ENCODE measurements at regions of chr12 and their contacts with region 1.

Region 1: DNA sequence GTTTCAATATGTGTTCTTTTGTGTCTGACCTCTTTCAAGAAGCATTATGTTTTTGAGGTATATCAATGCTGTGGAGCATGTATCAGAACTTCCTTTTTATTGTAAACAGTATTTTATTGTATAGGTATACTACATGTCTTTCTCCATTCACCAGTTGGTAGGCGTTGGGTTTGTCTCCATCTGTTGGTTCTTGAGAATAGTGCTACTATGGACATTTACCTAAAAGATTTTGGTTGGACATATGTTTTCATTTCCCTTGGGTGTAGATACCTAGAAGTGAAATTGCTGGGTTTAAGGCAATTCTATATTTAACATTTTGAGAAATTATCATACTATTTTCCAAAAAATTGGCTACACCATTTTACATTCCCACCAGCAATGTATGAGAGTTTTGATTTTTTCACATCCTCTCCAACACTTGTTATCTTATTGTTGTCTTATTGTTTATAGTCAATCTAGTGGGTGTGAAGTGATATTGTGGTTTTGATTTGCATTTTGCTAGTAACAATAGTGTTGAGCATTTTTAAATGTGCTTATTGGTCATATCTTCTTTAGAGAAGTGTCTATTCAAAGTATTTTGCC is 409.2 kb downstream of the IPO8 start:
- DNase-seq: peak in 1 of 2 experiments; percentile 51
- H3K4me3 ChIP-seq: no peak overlapping the region
- H3K4me3 Mint-ChIP-seq: no peak overlapping the region
- H3K27ac Mint-ChIP-seq: no peak overlapping the region
- H3K4me1 ChIP-seq: no peaks in the 10 kb centered on the region
- H3K4me1 Mint-ChIP-seq: no peaks in the 10 kb centered on the region
- H3K27me3 ChIP-seq: no peaks in the 10 kb centered on the region
- H3K27me3 Mint-ChIP-seq: peaks cover 2% of the 10 kb centered on the region
- CTCF ChIP-seq: peak; percentile 77

Region 2: DNA sequence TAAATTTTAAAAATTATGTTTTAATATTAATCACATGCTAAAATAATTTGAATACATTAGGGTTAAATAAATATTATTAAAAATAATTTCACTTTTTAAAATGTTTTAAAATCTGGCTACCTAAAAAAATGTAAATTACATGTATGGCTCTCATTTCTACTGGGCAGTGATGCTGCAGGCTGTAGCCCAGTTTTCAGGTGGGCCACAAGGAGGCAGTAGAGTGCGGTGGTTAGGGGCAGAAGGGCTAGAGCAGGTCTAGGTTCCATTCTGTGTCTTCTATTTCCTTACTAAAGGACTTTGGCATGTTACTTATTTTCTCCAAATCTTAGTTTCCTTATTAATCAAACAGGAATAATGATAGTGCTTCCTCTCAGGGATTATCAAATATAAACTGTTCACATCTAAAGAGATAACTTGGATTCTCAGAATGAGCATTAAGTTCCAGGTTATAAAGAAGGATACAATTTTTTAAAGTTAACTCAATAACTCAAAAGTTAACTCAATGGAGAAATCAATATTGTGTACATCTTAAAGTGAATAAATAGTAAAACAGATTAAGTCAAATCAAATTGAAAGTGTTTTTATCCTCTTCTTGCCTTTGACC is 734.0 kb before region 1 on chr12:
- CTCF ChIA-PET with region 1: no interaction called
- POLR2A ChIA-PET with region 1: no interaction called
- intact Hi-C with region 1: loop called (anchors 1 kb)
- DNase-seq: peak; percentile 68 to 77
- H3K4me3 ChIP-seq: no peak overlapping the region
- H3K4me3 Mint-ChIP-seq: no peak overlapping the region
- H3K27ac Mint-ChIP-seq: no peak overlapping the region
- H3K4me1 ChIP-seq: no peaks in the 10 kb centered on the region
- H3K4me1 Mint-ChIP-seq: no peaks in the 10 kb centered on the region
- H3K27me3 ChIP-seq: no peaks in the 10 kb centered on the region
- H3K27me3 Mint-ChIP-seq: peaks cover 10% of the 10 kb centered on the region
- CTCF ChIP-seq: peak; percentile 88 to 92

Region 3: DNA sequence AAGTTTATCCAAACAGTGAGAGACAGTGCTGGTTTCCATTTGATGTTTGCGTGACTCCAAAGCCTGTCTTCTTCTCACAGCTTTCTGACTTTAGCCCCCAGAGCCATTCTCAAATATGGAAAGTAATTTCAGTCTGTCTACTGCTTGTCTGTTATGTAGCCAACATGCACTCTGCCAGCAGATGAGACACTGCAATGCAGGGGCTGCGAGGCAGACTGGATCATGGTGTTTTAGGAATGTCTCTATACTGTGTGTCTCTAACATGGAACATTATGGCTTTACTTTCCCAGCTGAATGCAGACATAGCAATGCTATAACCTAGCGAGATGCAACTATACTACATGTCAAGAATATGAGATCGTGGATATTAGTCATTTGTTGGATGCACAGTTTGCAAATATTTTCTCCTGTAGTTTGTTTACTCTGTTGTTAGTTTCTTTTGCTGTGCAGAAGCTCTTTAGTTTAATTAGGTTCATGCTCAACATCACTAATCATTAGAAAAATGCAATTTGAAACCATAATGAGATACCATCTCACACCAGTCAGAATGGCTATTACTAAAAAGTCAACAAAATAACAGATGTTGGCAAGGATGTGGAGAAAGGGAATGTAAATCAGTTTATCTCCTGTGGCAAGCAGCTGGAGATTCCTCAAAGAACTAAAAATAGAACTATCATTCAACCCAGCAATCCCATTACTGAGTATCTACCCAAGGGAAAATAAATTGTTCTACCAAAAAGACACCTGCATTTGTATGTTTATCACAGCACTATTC is 266.9 kb before region 1 on chr12:
- CTCF ChIA-PET with region 1: no interaction called
- POLR2A ChIA-PET with region 1: no interaction called
- intact Hi-C with region 1: loop called (anchors 10 kb)
- DNase-seq: no peak
- H3K4me3 ChIP-seq: no peak overlapping the region
- H3K4me3 Mint-ChIP-seq: no peak overlapping the region
- H3K27ac Mint-ChIP-seq: no peak overlapping the region
- H3K4me1 ChIP-seq: peaks cover 8% of the 10 kb centered on the region; the same call in 1 of the 2 replicates
- H3K4me1 Mint-ChIP-seq: peaks cover 9% of the 10 kb centered on the region
- H3K27me3 ChIP-seq: no peaks in the 10 kb centered on the region
- H3K27me3 Mint-ChIP-seq: no peaks in the 10 kb centered on the region
- CTCF ChIP-seq: no peak

Region 4: GRCh38 chr12:30098677-30099076 is 187.8 kb before region 1 on chr12:
- CTCF ChIA-PET with region 1: no interaction called
- POLR2A ChIA-PET with region 1: no interaction called
- intact Hi-C with region 1: loop called (anchors 5 kb)
- DNase-seq: no peak
- H3K4me3 ChIP-seq: no peak overlapping the region
- H3K4me3 Mint-ChIP-seq: no peak overlapping the region
- H3K27ac Mint-ChIP-seq: no peak overlapping the region
- H3K4me1 ChIP-seq: no peaks in the 10 kb centered on the region
- H3K4me1 Mint-ChIP-seq: no peaks in the 10 kb centered on the region
- H3K27me3 ChIP-seq: no peaks in the 10 kb centered on the region
- H3K27me3 Mint-ChIP-seq: no peaks in the 10 kb centered on the region
- CTCF ChIP-seq: no peak

Region 5: DNA sequence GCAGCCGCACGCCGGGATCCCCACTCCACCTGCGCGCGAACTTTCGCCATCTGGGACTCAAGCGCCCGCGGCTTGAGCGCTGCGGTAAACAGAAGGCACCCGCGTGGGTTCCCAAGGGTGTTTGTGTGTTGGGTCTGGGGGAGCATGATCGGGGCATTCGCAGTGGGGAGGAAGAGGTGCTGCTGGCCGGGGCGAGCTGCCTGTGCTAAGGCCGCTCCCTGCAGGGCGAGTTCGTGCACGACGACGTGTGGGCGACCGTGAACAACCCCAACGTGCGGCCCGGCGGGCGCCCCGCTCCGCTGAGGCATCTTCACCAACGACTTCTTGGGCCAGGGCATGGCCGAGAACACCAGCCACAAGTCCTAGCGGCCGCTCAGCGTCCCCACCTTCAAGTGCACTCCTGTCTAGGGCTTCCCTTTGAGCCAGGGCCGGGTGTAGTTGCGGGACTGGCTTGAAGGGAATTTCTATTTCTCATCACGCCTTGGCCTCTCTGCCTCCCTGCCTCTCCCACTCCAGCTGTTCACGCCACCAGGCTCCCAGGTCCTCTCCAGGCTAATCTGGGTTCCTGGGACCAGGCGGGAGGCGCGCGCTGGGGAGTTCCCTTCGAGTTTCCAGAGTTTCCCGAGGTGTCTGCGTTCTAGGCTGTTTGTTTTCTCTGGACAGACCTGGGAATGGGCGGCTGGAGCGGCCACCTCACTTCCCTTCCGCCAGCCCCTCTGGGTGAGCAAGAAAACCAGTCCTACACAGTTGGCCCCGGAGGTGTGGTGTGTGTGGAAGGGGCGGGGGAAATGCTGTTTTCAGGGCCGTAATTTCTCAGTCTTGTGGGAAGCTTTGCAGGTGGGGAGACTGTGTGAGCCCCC is 84.9 kb before region 1 on chr12:
- CTCF ChIA-PET with region 1: no interaction called
- POLR2A ChIA-PET with region 1: no interaction called
- intact Hi-C with region 1: loop called (anchors 1 kb)
- DNase-seq: peak; percentile 24 to 48
- H3K4me3 ChIP-seq: no peak overlapping the region
- H3K4me3 Mint-ChIP-seq: peak overlapping the region; percentile 33
- H3K27ac Mint-ChIP-seq: peak overlapping the region; percentile 90
- H3K4me1 ChIP-seq: peaks cover 27% of the 10 kb centered on the region
- H3K4me1 Mint-ChIP-seq: peaks cover 24% of the 10 kb centered on the region
- H3K27me3 ChIP-seq: no peaks in the 10 kb centered on the region
- H3K27me3 Mint-ChIP-seq: no peaks in the 10 kb centered on the region
- CTCF ChIP-seq: no peak

Region 6: GRCh38 chr12:30243426-30243825 is 43.0 kb before region 1 on chr12:
- CTCF ChIA-PET with region 1: no interaction called
- POLR2A ChIA-PET with region 1: no interaction called
- intact Hi-C with region 1: no loop called
- DNase-seq: no peak
- H3K4me3 ChIP-seq: no peak overlapping the region
- H3K4me3 Mint-ChIP-seq: no peak overlapping the region
- H3K27ac Mint-ChIP-seq: no peak overlapping the region
- H3K4me1 ChIP-seq: no peaks in the 10 kb centered on the region
- H3K4me1 Mint-ChIP-seq: peaks cover 6% of the 10 kb centered on the region
- H3K27me3 ChIP-seq: no peaks in the 10 kb centered on the region; the same call in 1 of the 2 replicates
- H3K27me3 Mint-ChIP-seq: no peaks in the 10 kb centered on the region
- CTCF ChIP-seq: no peak

Region 7: DNA sequence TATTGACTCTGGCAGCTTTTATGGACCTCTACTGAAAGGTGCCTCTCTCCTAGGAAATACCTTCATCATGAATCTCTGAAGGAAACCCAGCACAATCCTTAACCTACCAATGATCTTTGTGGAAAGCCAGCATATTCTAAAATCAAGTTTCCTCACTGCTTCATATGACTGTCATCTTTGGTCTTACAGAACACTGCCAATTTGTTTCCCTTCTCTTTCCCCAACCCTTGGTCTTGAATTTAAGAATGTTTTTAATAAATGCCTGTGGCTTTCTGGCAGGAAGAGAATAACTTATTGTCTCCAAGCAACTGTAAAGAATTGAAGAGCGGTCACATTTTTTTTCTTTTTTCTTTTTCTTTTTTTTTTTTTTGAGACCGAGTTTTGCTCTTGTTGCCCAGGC is 18.4 kb before region 1 on chr12:
- CTCF ChIA-PET with region 1: no interaction called
- POLR2A ChIA-PET with region 1: no interaction called
- intact Hi-C with region 1: no loop called
- DNase-seq: no peak
- H3K4me3 ChIP-seq: no peak overlapping the region
- H3K4me3 Mint-ChIP-seq: no peak overlapping the region
- H3K27ac Mint-ChIP-seq: no peak overlapping the region
- H3K4me1 ChIP-seq: no peaks in the 10 kb centered on the region
- H3K4me1 Mint-ChIP-seq: no peaks in the 10 kb centered on the region
- H3K27me3 ChIP-seq: no peaks in the 10 kb centered on the region
- H3K27me3 Mint-ChIP-seq: no peaks in the 10 kb centered on the region
- CTCF ChIP-seq: no peak

Region 8: GRCh38 chr12:30345744-30346471 is 59.5 kb after region 1 on chr12:
- CTCF ChIA-PET with region 1: no interaction called
- POLR2A ChIA-PET with region 1: no interaction called
- intact Hi-C with region 1: no loop called
- DNase-seq: no peak
- H3K4me3 ChIP-seq: no peak overlapping the region
- H3K4me3 Mint-ChIP-seq: no peak overlapping the region
- H3K27ac Mint-ChIP-seq: no peak overlapping the region
- H3K4me1 ChIP-seq: no peaks in the 10 kb centered on the region
- H3K4me1 Mint-ChIP-seq: no peaks in the 10 kb centered on the region
- H3K27me3 ChIP-seq: no peaks in the 10 kb centered on the region
- H3K27me3 Mint-ChIP-seq: peaks cover 7% of the 10 kb centered on the region
- CTCF ChIP-seq: no peak

Region 9: GRCh38 chr12:30570211-30570890 is 283.9 kb after region 1 on chr12:
- CTCF ChIA-PET with region 1: no interaction called
- POLR2A ChIA-PET with region 1: no interaction called
- intact Hi-C with region 1: no loop called
- DNase-seq: no peak
- H3K4me3 ChIP-seq: no peak overlapping the region
- H3K4me3 Mint-ChIP-seq: no peak overlapping the region
- H3K27ac Mint-ChIP-seq: no peak overlapping the region
- H3K4me1 ChIP-seq: no peaks in the 10 kb centered on the region
- H3K4me1 Mint-ChIP-seq: no peaks in the 10 kb centered on the region
- H3K27me3 ChIP-seq: no peaks in the 10 kb centered on the region
- H3K27me3 Mint-ChIP-seq: peaks cover 12% of the 10 kb centered on the region
- CTCF ChIP-seq: no peak